Heart left ventricle (tissue), 16 donors: ENCODE measurements at regions of chr19 and their contacts with region 1.

Region 1: GRCh38 chr19:50777754-50778303 is 7.6 kb downstream of the GPR32 start:
- DNase-seq: no peak
- ATAC-seq: no peak
- H3K4me3 ChIP-seq: no peak overlapping the region
- H3K27ac ChIP-seq: no peak overlapping the region
- H3K4me1 ChIP-seq: peaks cover 0 to 3% (median 0%) of the 10 kb centered on the region in 12 donors
- H3K27me3 ChIP-seq: peaks cover 28 to 96% (median 60%) of the 10 kb centered on the region in 9 donors
- CTCF ChIP-seq: no peak
- POLR2A ChIP-seq: no peak

Region 2: GRCh38 chr19:50531118-50531612 is 246.7 kb before region 1 on chr19:
- intact Hi-C with region 1: loop called in 7 of 10 experiments (anchors 2 to 5 kb)
- DNase-seq: no peak
- ATAC-seq: no peak
- H3K4me3 ChIP-seq: no peak overlapping the region
- H3K27ac ChIP-seq: no peak overlapping the region
- H3K4me1 ChIP-seq: no peaks in the 10 kb centered on the region
- H3K27me3 ChIP-seq: peaks cover 0 to 9% (median 0%) of the 10 kb centered on the region in 9 donors
- CTCF ChIP-seq: no peak
- POLR2A ChIP-seq: no peak

Region 3: GRCh38 chr19:50537762-50538230 is 240.0 kb before region 1 on chr19:
- intact Hi-C with region 1: loop called (anchors 1 to 5 kb)
- DNase-seq: peak; percentile 52 to 86 (median 80)
- ATAC-seq: peak; percentile 75 to 86 (median 82)
- H3K4me3 ChIP-seq: no peak overlapping the region
- H3K27ac ChIP-seq: no peak overlapping the region
- H3K4me1 ChIP-seq: peaks cover 0 to 3% (median 0%) of the 10 kb centered on the region in 12 donors
- H3K27me3 ChIP-seq: no peaks in the 10 kb centered on the region
- CTCF ChIP-seq: peak; percentile 62 to 82 (median 75)
- POLR2A ChIP-seq: no peak

Region 4: GRCh38 chr19:50679177-50680125 is 98.4 kb before region 1 on chr19:
- intact Hi-C with region 1: loop called in 1 of 10 experiments (anchors 10 kb)
- DNase-seq: peak; percentile 67 to 89 (median 74)
- ATAC-seq: peak; percentile 77 to 97 (median 94)
- H3K4me3 ChIP-seq: no peak overlapping the region
- H3K27ac ChIP-seq: no peak overlapping the region
- H3K4me1 ChIP-seq: peaks cover 0 to 3% (median 0%) of the 10 kb centered on the region in 12 donors
- H3K27me3 ChIP-seq: peaks cover 0 to 51% (median 8%) of the 10 kb centered on the region in 9 donors
- CTCF ChIP-seq: no peak
- POLR2A ChIP-seq: no peak

Region 5: GRCh38 chr19:50705422-50706019 is 72.3 kb before region 1 on chr19:
- intact Hi-C with region 1: loop called in 7 of 10 experiments (anchors 1 to 10 kb)
- DNase-seq: no peak
- ATAC-seq: peak in 2 of 4 donors; percentile 47 to 58
- H3K4me3 ChIP-seq: no peak overlapping the region
- H3K27ac ChIP-seq: no peak overlapping the region
- H3K4me1 ChIP-seq: no peaks in the 10 kb centered on the region
- H3K27me3 ChIP-seq: peaks cover 3 to 43% (median 12%) of the 10 kb centered on the region in 9 donors
- CTCF ChIP-seq: peak; percentile 24 to 58 (median 48)
- POLR2A ChIP-seq: no peak